Activated B cell treated with CpG ODN at 0.5 μM for 24 hours (primary cell): ENCODE measurements at regions of chr10 and their contacts with region 1.

Region 1: DNA sequence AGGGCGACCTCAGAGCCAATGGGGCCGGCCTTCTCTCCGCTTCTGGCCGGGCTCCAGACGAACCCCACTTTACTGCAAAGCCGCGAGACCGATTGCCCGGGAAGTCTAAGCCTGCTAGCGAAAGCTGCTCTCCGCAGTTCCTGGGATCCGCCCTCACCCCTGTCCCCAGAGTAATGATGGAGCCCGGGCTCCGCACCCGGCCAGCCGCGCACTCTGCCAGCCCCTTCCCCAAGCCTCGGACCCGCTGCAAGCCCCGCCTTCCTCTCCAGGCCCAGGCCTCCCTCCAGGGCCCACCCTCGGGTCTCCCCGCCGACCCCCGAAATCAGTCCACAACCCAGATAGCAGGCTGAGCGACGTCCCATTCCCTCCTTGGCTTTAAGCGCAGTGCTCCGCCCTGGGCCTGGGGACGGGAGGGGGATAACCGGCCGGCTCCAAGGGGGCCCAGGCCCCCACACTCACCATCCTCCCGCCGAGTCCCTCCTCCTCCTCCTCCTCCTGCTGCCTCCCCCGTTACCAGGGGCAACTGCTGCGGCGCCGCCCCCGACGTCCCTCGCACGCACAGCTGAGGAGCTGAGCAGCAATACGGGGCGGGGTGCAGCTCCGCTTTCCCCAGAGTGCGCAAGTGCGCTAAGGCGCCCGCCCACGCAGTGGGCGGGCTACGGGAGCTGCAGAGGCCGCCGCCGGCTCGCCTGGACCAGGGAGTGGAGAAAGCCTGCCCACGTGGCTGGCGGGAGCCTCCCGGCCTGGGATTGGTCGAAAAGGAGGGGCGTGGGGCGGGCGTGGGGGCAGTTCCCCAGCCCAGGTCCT is at the start of gene ARL3:
- DNase-seq: peak; percentile 89
- ATAC-seq: peak; percentile 85
- H3K4me3 Mint-ChIP-seq: peak within 1 kb of the TSS; percentile 95
- H3K27ac Mint-ChIP-seq: peak within 1 kb of the TSS; percentile 92
- H3K4me1 Mint-ChIP-seq: peaks cover 44% of the 10 kb centered on the region
- H3K27me3 Mint-ChIP-seq: no peaks in the 10 kb centered on the region
- CTCF ChIP-seq: no peak
- total RNA-seq, gene ARL3: 4.1 and 5.1 TPM in 2 replicates

Region 2: DNA sequence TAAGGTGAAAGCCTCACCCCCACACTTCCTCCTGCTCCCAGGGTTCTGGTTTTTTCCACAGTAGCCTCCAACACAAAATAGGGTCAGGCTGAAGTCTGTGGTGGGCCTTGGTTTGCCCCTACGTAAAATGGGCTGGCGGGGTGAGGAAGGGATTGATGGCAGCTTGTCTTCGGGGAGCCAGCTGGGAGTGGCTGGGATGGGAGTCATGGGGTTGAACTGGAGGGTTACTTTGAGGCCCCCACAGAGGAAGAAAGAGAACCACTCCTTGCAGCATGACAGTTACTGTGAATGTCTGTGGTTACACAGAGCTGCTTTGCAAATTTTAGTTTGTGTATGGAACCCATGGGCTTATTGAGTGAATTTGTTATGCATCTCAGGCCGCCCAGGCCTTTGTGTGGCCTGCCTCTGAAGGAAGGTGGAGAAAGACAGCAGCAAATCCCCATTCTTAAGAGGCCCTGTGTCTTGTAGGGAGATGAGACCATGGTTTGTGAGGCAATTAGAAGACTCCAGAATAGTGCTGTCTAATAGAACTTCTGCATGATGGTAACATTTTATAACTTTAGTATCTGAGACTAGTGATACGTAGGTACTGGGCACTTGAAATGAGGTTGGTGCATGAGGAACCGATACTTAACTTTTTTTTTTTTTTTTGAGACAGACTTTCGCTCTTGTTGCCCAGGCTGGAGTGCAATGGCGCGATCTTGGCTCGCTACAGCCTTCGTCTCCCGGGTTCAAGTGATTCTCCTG is 61.7 kb before region 1 on chr10:
- CTCF ChIA-PET with region 1: interaction called, 4 read pairs
- POLR2A ChIA-PET with region 1: interaction called, 22 read pairs
- intact Hi-C with region 1: no loop called
- DNase-seq: no peak
- ATAC-seq: peak; percentile 57
- H3K4me3 Mint-ChIP-seq: peak overlapping the region; percentile 78
- H3K27ac Mint-ChIP-seq: peak overlapping the region; percentile 98
- H3K4me1 Mint-ChIP-seq: peaks cover 68% of the 10 kb centered on the region
- H3K27me3 Mint-ChIP-seq: no peaks in the 10 kb centered on the region
- CTCF ChIP-seq: no peak

Region 3: DNA sequence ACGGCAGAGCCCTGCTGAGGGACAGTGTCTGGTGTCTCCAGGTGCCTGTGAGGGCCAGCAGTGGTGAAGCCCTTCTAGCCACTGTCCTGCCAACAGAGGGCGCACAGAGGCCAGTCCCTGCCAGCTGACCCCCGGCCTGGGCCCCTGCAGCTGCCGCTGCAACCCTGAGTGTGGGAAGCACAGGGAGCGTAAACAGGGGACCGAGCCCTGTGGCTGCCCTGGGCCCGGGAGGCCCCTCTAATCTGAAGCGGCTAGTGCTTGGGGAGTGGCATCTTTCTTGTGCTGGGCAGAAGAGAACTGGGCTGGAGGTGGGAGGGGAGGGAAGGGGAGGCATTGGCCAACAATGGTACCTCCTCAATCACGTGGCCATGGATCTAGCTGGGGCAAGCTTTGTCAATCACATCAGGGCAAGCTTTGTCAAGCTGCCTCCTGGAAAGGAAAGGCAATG is 35.2 kb before region 1 on chr10:
- CTCF ChIA-PET with region 1: interaction called, 7 read pairs
- POLR2A ChIA-PET with region 1: interaction called, 11 read pairs
- intact Hi-C with region 1: loop called (anchors 5 kb)
- DNase-seq: peak; percentile 34
- ATAC-seq: no peak
- H3K4me3 Mint-ChIP-seq: no peak overlapping the region
- H3K27ac Mint-ChIP-seq: no peak overlapping the region
- H3K4me1 Mint-ChIP-seq: peaks cover 34% of the 10 kb centered on the region
- H3K27me3 Mint-ChIP-seq: no peaks in the 10 kb centered on the region
- CTCF ChIP-seq: no peak

Region 4: DNA sequence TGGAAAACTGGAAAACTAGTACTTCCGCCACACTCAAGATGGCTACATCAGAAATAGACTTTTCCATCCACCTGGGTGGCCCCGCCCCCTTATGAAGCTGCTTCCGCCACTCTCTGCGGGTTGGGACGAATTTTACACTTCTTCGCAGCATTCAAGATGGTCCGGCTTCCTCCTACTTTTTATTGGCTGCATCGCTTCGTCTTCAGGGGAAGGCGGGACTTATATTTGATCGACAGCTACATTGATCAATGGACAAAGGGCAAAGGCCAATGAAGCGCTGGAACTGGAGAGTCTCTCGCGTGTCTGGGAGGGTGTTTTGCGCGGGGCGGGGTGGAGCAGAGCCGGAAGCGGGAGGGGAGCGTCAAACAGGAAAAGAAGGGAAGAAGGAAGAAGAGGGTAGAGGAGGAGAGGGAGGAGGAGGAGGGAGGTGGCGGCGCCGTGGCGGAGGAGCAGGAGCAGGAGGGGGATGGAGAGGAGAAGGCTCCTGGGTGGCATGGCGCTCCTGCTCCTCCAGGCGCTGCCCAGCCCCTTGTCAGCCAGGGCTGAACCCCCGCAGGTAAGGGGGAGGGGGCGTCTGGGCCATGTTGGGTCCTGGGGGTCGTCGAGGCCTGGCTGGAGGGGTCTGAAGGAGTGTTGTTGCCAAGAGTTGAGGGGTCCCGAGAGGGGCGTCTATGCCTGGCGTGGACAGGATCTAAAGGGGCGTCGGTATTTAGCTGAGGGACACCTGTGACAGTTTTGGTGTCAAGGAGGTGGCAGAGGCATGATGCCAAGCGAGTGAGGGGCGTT is 29.8 kb after region 1 on chr10 and contains the start of gene WBP1L:
- CTCF ChIA-PET with region 1: interaction called, 5 read pairs
- POLR2A ChIA-PET with region 1: interaction called, 21 read pairs
- intact Hi-C with region 1: loop called (anchors 1 kb)
- DNase-seq: peak; percentile 81
- ATAC-seq: peak; percentile 98
- H3K4me3 Mint-ChIP-seq: peak within 1 kb of the TSS; percentile 93
- H3K27ac Mint-ChIP-seq: peak within 1 kb of the TSS; percentile 87
- H3K4me1 Mint-ChIP-seq: peaks cover 47% of the 10 kb centered on the region
- H3K27me3 Mint-ChIP-seq: no peaks in the 10 kb centered on the region
- CTCF ChIP-seq: no peak
- total RNA-seq, gene WBP1L: 30.5 and 30.8 TPM in 2 replicates

Region 5: GRCh38 chr10:103367782-103368518 is 653.9 kb after region 1 on chr10 and contains the start of gene TAF5:
- CTCF ChIA-PET with region 1: no interaction called
- POLR2A ChIA-PET with region 1: no interaction called
- intact Hi-C with region 1: loop called (anchors 1 kb)
- DNase-seq: peak; percentile 79
- ATAC-seq: peak; percentile 72
- H3K4me3 Mint-ChIP-seq: peak within 1 kb of the TSS; percentile 90
- H3K27ac Mint-ChIP-seq: peak within 1 kb of the TSS; percentile 87
- H3K4me1 Mint-ChIP-seq: peaks cover 12% of the 10 kb centered on the region
- H3K27me3 Mint-ChIP-seq: no peaks in the 10 kb centered on the region
- CTCF ChIP-seq: no peak
- total RNA-seq, gene TAF5: 3.6 and 3.8 TPM in 2 replicates